ENCODE measurements at regions of chr17 and their contacts with region 1.

Region 1: DNA sequence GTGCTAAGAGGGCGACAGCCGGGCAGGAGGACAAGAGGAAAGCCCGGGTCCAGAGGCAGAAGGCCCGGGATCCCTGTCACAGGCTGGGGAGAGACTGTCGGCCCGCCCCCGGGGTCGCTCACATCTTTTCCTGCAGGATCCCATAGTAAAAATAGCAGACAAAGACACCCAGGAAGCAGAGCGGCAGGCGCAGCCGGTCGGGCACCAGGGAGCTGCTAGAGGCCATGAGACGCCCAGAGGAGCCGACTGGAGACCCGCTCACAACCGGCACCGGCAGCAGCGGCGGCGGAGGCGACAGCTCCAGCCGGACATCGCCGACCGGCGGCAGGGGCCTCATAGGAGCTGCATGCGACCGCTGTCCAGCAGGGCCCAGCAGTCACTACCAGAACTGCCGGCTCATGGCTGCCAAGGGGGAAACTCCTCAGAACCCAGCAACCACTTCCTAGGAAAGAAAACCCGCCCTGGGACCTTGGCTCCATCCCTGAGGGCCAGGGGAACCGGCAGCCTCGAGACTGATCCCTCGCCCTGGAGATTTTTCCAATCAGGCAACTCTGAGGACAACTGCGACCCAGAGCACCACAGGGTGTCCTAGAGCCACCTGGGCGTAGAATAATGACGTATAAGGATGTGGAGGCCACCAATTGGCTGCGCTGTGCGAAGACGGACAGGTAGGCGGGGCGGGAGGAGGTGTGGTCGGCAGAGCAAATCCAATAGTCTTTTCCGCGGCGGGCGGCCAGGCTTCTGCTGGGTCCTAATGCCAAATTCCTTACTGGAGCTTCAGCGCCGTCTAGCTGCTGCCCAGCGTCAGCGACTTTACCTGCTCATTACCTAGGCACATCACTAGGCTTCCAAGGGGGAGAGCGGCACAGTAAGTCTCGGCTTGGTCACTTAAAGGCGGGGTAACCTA is at the start of gene SLC35B1:
- DNase-seq: peak; percentile 95
- ATAC-seq: peak; percentile 98
- H3K4me3 Mint-ChIP-seq: peak within 1 kb of the TSS; percentile 93
- H3K27ac Mint-ChIP-seq: peak within 1 kb of the TSS; percentile 98
- H3K4me1 Mint-ChIP-seq: peaks cover 36% of the 10 kb centered on the region
- H3K27me3 Mint-ChIP-seq: no peaks in the 10 kb centered on the region
- total RNA-seq, gene SLC35B1: 45.9 to 48.5 TPM

Region 2: GRCh38 chr17:49575579-49576087 is 132.2 kb before region 1 on chr17 and contains the start of gene NXPH3:
- POLR2A ChIA-PET with region 1: interaction called, 10 read pairs
- DNase-seq: peak; percentile 94
- ATAC-seq: peak; percentile 92
- H3K4me3 Mint-ChIP-seq: peak within 1 kb of the TSS; percentile 82
- H3K27ac Mint-ChIP-seq: no peak within 1 kb of the TSS
- H3K4me1 Mint-ChIP-seq: peaks cover 13% of the 10 kb centered on the region
- H3K27me3 Mint-ChIP-seq: peaks cover 61% of the 10 kb centered on the region
- total RNA-seq, gene NXPH3: 0.14 TPM in 1 of 2 experiments, not detected in the other

Region 3: DNA sequence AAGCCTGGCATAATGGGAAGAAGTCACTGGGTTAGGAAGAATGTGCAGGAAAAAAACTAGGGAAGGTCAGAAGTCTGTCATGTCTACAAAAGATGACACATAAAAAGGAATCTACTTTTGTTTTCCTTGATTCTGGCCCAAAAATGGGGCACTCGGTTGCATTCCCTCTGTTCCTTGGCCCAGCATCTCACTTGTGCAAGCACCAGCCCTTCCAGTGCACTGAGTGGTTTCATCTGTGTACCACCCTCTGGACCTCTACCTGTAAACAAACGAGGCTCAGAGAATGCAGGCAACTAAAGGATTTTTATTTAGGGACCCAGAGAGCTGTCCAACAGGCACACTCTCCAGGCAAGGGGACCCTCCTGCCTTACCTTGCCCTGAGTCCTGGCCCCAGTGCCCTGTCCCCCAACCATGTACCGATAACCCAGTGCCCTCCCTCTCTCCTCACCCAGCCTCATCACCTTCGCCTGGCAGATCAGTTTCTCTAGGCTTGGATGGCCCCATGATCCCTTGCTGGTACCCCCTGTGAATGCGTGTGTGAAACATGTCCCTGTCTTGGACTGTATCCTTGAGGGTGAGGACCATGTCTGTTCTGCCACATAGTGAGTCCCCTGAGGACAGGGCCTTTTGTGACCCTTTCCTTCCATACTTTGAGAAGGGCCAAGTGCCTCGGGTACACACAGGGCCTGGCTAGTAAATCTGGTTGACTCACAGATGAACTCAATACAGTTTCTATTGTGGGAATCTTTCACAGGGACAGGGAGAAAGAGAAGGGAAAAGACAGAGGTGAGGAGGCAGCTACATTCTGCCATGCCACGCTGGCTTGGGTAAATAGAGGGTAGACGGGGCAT is 118.9 kb before region 1 on chr17:
- POLR2A ChIA-PET with region 1: no interaction called
- DNase-seq: no peak
- ATAC-seq: no peak
- H3K4me3 Mint-ChIP-seq: no peak overlapping the region
- H3K27ac Mint-ChIP-seq: no peak overlapping the region
- H3K4me1 Mint-ChIP-seq: peaks cover 4% of the 10 kb centered on the region
- H3K27me3 Mint-ChIP-seq: no peaks in the 10 kb centered on the region

Region 4: DNA sequence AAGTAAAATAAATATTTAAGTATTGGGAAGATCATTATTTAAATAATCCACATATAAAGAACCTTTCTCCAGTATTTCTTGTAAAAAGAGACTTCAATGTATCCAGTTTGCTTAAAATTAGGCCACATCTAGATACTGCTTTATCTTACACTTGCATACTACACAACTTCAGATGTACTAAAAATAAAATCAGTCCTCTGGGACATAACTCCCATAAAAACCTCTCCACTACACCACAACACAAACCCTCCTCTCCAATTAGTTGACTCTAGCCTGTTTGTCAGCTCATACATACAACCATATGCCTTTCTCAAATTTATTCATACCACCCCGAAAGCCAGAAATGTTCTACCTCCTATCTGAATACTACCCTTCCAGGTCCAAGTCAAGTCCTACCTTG is 51.6 kb before region 1 on chr17:
- POLR2A ChIA-PET with region 1: no interaction called
- DNase-seq: no peak
- ATAC-seq: no peak
- H3K4me3 Mint-ChIP-seq: no peak overlapping the region
- H3K27ac Mint-ChIP-seq: no peak overlapping the region
- H3K4me1 Mint-ChIP-seq: peaks cover 11% of the 10 kb centered on the region
- H3K27me3 Mint-ChIP-seq: no peaks in the 10 kb centered on the region

Region 5: GRCh38 chr17:49725452-49726130 is 17.7 kb after region 1 on chr17:
- POLR2A ChIA-PET with region 1: no interaction called
- DNase-seq: no peak
- ATAC-seq: no peak
- H3K4me3 Mint-ChIP-seq: no peak overlapping the region
- H3K27ac Mint-ChIP-seq: no peak overlapping the region
- H3K4me1 Mint-ChIP-seq: peaks cover 23% of the 10 kb centered on the region
- H3K27me3 Mint-ChIP-seq: no peaks in the 10 kb centered on the region

Region 6: GRCh38 chr17:49748791-49749190 is 40.9 kb after region 1 on chr17:
- POLR2A ChIA-PET with region 1: interaction called, 12 read pairs
- DNase-seq: peak; percentile 32
- ATAC-seq: peak; percentile 69
- H3K4me3 Mint-ChIP-seq: peak overlapping the region; percentile 79
- H3K27ac Mint-ChIP-seq: peak overlapping the region; percentile 85
- H3K4me1 Mint-ChIP-seq: peaks cover 59% of the 10 kb centered on the region
- H3K27me3 Mint-ChIP-seq: no peaks in the 10 kb centered on the region

Measured in activated naive CD8-positive, alpha-beta T cell treated with anti-CD3 and anti-CD28 coated beads, Interleukin-2, amount 10 ng/mL, durations not matched to agents 7 days and 5 days (primary cell).